ENCODE measurements at regions of chr14 and their contacts with region 1.

Region 1: GRCh38 chr14:102437997-102438915 is 71.3 kb downstream of the ANKRD9 start:
- DNase-seq: peak in 4 of 5 donors; percentile 38 to 65 (median 48)
- H3K4me3 ChIP-seq: no peak overlapping the region
- H3K4me3 Mint-ChIP-seq: peak overlapping the region in 2 of 8 donors; percentile 11 to 69
- H3K27ac ChIP-seq: no peak overlapping the region
- H3K27ac Mint-ChIP-seq: peak overlapping the region in 1 of 7 donors; percentile 80
- H3K4me1 ChIP-seq: no peaks in the 10 kb centered on the region
- H3K4me1 Mint-ChIP-seq: no peaks in the 10 kb centered on the region
- H3K27me3 ChIP-seq: no peaks in the 10 kb centered on the region
- H3K27me3 Mint-ChIP-seq: no peaks in the 10 kb centered on the region

Region 2: DNA sequence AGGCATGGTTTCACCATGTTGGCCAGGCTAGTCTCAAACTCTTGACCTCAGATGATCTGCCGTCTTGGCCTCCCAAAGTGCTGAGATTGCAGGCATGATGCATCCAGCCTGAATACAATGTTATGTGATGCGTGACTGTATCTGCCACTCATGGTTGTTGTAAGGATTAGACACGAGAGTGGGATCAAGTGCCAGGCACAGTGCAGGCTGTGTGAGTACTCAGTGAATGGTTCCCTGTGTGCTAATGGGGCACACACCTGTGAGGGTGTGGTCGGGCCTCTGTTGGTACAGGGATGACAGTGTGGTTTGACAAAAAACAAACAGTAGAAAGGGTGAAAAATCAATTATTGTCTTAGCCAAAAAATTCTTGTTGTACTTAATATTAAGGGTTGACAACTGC is 13.7 kb before region 1 on chr14:
- CTCF ChIA-PET with region 1: interaction called, 11 read pairs
- POLR2A ChIA-PET with region 1: no interaction called
- intact Hi-C with region 1: no loop called
- DNase-seq: no peak
- H3K4me3 ChIP-seq: no peak overlapping the region
- H3K4me3 Mint-ChIP-seq: no peak overlapping the region
- H3K27ac ChIP-seq: no peak overlapping the region
- H3K27ac Mint-ChIP-seq: no peak overlapping the region
- H3K4me1 ChIP-seq: no peaks in the 10 kb centered on the region
- H3K4me1 Mint-ChIP-seq: peaks cover 0 to 1% (median 0%) of the 10 kb centered on the region in 4 donors
- H3K27me3 ChIP-seq: no peaks in the 10 kb centered on the region
- H3K27me3 Mint-ChIP-seq: no peaks in the 10 kb centered on the region

Region 3: GRCh38 chr14:102456168-102456567 is 17.9 kb after region 1 on chr14:
- CTCF ChIA-PET with region 1: interaction called, 11 read pairs
- POLR2A ChIA-PET with region 1: no interaction called
- intact Hi-C with region 1: no loop called
- DNase-seq: no peak
- H3K4me3 ChIP-seq: no peak overlapping the region
- H3K4me3 Mint-ChIP-seq: no peak overlapping the region
- H3K27ac ChIP-seq: no peak overlapping the region
- H3K27ac Mint-ChIP-seq: no peak overlapping the region
- H3K4me1 ChIP-seq: no peaks in the 10 kb centered on the region
- H3K4me1 Mint-ChIP-seq: no peaks in the 10 kb centered on the region
- H3K27me3 ChIP-seq: no peaks in the 10 kb centered on the region
- H3K27me3 Mint-ChIP-seq: no peaks in the 10 kb centered on the region

Region 4: GRCh38 chr14:102500158-102500662 is 62.0 kb after region 1 on chr14:
- CTCF ChIA-PET with region 1: interaction called, 10 read pairs
- POLR2A ChIA-PET with region 1: interaction called, 3 read pairs
- intact Hi-C with region 1: no loop called
- DNase-seq: peak in 3 of 5 donors; percentile 46 to 54 (median 48)
- H3K4me3 ChIP-seq: no peak overlapping the region
- H3K4me3 Mint-ChIP-seq: no peak overlapping the region
- H3K27ac ChIP-seq: no peak overlapping the region
- H3K27ac Mint-ChIP-seq: peak overlapping the region; percentile 64 to 91 (median 82)
- H3K4me1 ChIP-seq: peaks cover 10% of the 10 kb centered on the region
- H3K4me1 Mint-ChIP-seq: peaks cover 9 to 14% (median 10%) of the 10 kb centered on the region in 4 donors
- H3K27me3 ChIP-seq: no peaks in the 10 kb centered on the region
- H3K27me3 Mint-ChIP-seq: no peaks in the 10 kb centered on the region

Region 5: GRCh38 chr14:102509744-102510615 is 71.7 kb after region 1 on chr14 and contains the start of gene ANKRD9:
- CTCF ChIA-PET with region 1: interaction called, 252 read pairs
- POLR2A ChIA-PET with region 1: interaction called, 6 read pairs
- intact Hi-C with region 1: no loop called
- DNase-seq: peak; percentile 71 to 80 (median 75)
- H3K4me3 ChIP-seq: peak within 1 kb of the TSS; percentile 57 to 68
- H3K4me3 Mint-ChIP-seq: peak within 1 kb of the TSS; percentile 85 to 89 (median 86)
- H3K27ac ChIP-seq: peak within 1 kb of the TSS; percentile 44
- H3K27ac Mint-ChIP-seq: peak within 1 kb of the TSS; percentile 75 to 88 (median 79)
- H3K4me1 ChIP-seq: peaks cover 13% of the 10 kb centered on the region
- H3K4me1 Mint-ChIP-seq: peaks cover 1 to 20% (median 10%) of the 10 kb centered on the region in 4 donors
- H3K27me3 ChIP-seq: no peaks in the 10 kb centered on the region
- H3K27me3 Mint-ChIP-seq: peaks cover 0 to 2% of the 10 kb centered on the region in 2 donors
- total RNA-seq, gene ANKRD9: 1.8 to 2.5 TPM

Region 6: GRCh38 chr14:102524466-102525218 is 86.4 kb after region 1 on chr14:
- CTCF ChIA-PET with region 1: interaction called, 252 read pairs
- POLR2A ChIA-PET with region 1: no interaction called
- intact Hi-C with region 1: no loop called
- DNase-seq: peak; percentile 84 to 91 (median 87)
- H3K4me3 ChIP-seq: peak overlapping the region; percentile 59 to 87
- H3K4me3 Mint-ChIP-seq: peak overlapping the region; percentile 80 to 93 (median 89)
- H3K27ac ChIP-seq: peak overlapping the region; percentile 48
- H3K27ac Mint-ChIP-seq: peak overlapping the region; percentile 70 to 95 (median 90)
- H3K4me1 ChIP-seq: peaks cover 22% of the 10 kb centered on the region
- H3K4me1 Mint-ChIP-seq: peaks cover 14 to 31% (median 24%) of the 10 kb centered on the region in 4 donors
- H3K27me3 ChIP-seq: no peaks in the 10 kb centered on the region
- H3K27me3 Mint-ChIP-seq: no peaks in the 10 kb centered on the region